WTC11 (cell line): ENCODE measurements at regions of chr6 and their contacts with region 1.

Region 1: GRCh38 chr6:39228992-39229767 is at the start of gene KCNK5:
- DNase-seq: peak; percentile 92
- ATAC-seq: peak; percentile 87
- H3K4me3 Mint-ChIP-seq: peak within 1 kb of the TSS; percentile 89
- H3K27ac Mint-ChIP-seq: peak within 1 kb of the TSS; percentile 91
- H3K4me1 Mint-ChIP-seq: peaks cover 83% of the 10 kb centered on the region
- H3K27me3 Mint-ChIP-seq: no peaks in the 10 kb centered on the region
- CTCF ChIP-seq: peak; percentile 74
- total RNA-seq, gene KCNK5: 31.7 to 41.8 TPM (median 34.3 TPM) in 3 replicates

Region 2: DNA sequence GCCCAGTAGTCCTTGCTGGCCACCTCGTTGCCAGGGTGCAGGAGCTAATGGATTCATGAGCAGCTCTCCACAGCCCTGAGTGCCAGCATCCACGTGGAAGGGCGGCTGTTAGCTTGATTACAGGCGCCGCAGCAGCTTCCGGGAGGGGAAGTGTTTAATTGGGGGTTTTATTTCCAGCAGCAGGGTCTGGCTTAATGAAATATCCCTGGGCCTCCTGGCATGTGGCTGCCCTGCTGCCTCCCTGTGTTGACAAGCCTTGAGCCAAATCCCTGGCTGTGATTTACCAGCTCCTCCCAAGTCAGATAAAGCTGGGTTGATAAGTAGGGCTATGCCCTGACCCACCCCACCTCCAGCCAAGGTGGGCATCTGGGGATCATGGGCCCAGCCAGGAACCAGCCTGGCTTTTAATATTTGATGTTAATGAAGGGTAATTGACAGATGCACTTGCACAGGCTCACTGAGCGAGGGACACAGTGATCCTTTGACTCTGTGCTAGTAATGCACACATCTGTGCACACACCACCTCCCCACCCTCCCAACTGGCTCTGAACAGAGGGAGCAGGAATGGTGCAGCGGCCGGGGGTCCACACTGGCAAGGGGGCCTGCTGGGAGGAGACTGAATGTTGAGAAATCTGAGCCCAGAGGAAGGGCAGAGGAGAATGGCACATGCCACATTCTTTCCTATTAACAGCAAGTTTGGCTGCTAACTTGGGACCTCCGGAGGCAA is 167.0 kb before region 1 on chr6:
- CTCF ChIA-PET with region 1: no interaction called
- POLR2A ChIA-PET with region 1: no interaction called
- DNase-seq: no peak
- ATAC-seq: no peak
- H3K4me3 Mint-ChIP-seq: no peak overlapping the region
- H3K27ac Mint-ChIP-seq: no peak overlapping the region
- H3K4me1 Mint-ChIP-seq: no peaks in the 10 kb centered on the region
- H3K27me3 Mint-ChIP-seq: no peaks in the 10 kb centered on the region
- CTCF ChIP-seq: no peak

Region 3: GRCh38 chr6:39218873-39219536 is 10.2 kb before region 1 on chr6:
- CTCF ChIA-PET with region 1: interaction called, 12 read pairs
- POLR2A ChIA-PET with region 1: no interaction called
- DNase-seq: no peak
- ATAC-seq: no peak
- H3K4me3 Mint-ChIP-seq: no peak overlapping the region
- H3K27ac Mint-ChIP-seq: peak overlapping the region; percentile 48; the same call in 1 of the 2 replicates
- H3K4me1 Mint-ChIP-seq: peaks cover 92% of the 10 kb centered on the region
- H3K27me3 Mint-ChIP-seq: no peaks in the 10 kb centered on the region
- CTCF ChIP-seq: no peak

Region 4: DNA sequence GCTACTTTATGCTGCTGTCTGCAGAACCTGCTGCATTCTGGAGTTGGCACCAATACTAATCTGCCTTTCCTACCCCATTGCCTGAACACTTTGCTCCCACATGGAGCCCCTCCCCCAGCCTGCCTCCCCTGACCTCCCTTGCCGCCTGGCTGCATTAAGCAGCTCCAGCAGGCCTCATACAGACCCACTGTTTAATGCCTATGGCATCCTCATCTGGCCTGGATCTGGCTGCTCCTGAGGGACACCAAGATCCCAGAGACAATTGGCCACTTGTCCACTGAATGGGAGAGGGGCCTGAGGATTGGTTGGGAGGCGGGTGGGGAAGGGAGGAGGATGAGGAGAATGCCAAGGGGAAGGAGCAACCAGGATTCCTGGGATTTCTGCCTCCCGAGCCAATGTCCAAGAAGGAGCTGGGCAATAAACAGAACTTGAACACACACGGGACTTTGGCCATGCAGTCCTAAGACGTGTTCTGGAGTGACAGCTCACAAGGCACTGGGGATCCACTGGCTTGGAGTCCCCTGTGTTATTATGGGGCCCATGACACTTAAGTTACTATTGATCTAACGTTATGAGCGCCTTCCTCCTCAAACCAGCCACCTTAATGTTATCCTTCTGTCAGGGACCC is 10.5 kb after region 1 on chr6:
- CTCF ChIA-PET with region 1: interaction called, 13 read pairs
- POLR2A ChIA-PET with region 1: interaction called, 5 read pairs
- DNase-seq: no peak
- ATAC-seq: peak; percentile 68
- H3K4me3 Mint-ChIP-seq: no peak overlapping the region
- H3K27ac Mint-ChIP-seq: no peak overlapping the region
- H3K4me1 Mint-ChIP-seq: peaks cover 14% of the 10 kb centered on the region; the same call in 1 of the 2 replicates
- H3K27me3 Mint-ChIP-seq: no peaks in the 10 kb centered on the region
- CTCF ChIP-seq: no peak

Region 5: DNA sequence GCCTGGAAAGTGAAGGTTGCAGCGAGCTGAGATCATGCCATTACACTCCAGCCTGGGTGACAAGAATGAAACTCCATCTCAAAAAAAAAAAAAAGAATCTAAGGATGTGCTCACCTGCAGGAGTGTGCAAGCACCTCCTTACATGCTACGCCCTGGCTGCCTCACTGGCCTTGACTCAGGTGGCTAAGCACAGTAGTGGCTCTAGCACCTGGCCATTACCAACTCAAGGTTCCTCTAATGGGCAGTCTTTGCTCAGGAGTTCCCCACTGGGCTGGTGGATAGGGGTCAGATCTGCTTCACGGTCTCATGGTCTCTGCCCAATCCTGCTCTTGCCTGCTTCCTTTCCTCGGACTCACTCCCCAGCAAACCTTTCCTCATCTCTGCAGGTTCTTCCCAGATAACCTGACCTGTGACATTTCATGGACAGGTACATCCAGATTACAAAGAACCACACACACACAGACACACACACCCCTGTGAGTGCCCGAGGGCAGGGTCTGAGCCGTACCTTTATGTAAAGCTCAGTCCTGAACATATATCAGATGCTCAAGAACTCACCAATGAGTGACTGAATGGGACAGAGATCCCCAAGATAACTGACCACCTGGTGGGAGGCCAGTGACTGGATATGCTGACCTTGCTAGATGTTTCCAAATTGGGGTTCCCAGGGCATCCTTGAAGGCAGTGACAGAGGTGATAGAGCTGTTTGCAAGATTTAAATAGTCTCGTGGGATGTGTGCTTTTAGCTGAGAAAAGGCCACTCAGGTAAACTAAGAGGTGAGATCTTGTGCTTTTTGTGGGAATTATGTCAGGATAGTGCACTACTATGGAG is 45.5 kb after region 1 on chr6:
- CTCF ChIA-PET with region 1: no interaction called
- POLR2A ChIA-PET with region 1: no interaction called
- DNase-seq: no peak
- ATAC-seq: no peak
- H3K4me3 Mint-ChIP-seq: no peak overlapping the region
- H3K27ac Mint-ChIP-seq: no peak overlapping the region
- H3K4me1 Mint-ChIP-seq: peaks cover 38% of the 10 kb centered on the region
- H3K27me3 Mint-ChIP-seq: no peaks in the 10 kb centered on the region; the same call in 1 of the 2 replicates
- CTCF ChIP-seq: no peak

Region 6: DNA sequence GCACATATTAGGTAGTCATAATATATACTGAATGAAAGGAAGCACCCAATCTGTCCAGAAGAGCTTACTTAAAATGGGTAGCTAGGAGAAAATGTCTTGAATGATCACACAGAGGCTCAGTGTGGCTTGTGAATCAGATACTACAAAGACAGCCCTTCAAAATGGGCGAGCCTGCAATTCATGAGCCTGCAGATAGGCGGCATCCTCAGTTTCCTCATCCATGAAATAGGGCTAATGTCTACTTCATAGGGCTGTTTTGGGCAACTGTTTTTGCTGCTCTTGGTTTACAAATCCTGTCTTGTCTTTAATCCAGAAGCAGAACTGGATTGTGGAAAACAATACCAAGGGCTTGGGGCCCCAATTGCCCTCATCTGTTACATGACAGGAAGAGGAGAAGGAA is 222.7 kb after region 1 on chr6:
- CTCF ChIA-PET with region 1: no interaction called
- POLR2A ChIA-PET with region 1: no interaction called
- DNase-seq: peak; percentile 55
- ATAC-seq: peak; percentile 46; the same call in 1 of the 2 replicates
- H3K4me3 Mint-ChIP-seq: no peak overlapping the region
- H3K27ac Mint-ChIP-seq: no peak overlapping the region
- H3K4me1 Mint-ChIP-seq: peaks cover 7% of the 10 kb centered on the region; the same call in 1 of the 2 replicates
- H3K27me3 Mint-ChIP-seq: peaks cover 2% of the 10 kb centered on the region; the same call in 1 of the 2 replicates
- CTCF ChIP-seq: peak; percentile 82